ENCODE measurements at regions of chr14 and their contacts with region 1.

Region 1: DNA sequence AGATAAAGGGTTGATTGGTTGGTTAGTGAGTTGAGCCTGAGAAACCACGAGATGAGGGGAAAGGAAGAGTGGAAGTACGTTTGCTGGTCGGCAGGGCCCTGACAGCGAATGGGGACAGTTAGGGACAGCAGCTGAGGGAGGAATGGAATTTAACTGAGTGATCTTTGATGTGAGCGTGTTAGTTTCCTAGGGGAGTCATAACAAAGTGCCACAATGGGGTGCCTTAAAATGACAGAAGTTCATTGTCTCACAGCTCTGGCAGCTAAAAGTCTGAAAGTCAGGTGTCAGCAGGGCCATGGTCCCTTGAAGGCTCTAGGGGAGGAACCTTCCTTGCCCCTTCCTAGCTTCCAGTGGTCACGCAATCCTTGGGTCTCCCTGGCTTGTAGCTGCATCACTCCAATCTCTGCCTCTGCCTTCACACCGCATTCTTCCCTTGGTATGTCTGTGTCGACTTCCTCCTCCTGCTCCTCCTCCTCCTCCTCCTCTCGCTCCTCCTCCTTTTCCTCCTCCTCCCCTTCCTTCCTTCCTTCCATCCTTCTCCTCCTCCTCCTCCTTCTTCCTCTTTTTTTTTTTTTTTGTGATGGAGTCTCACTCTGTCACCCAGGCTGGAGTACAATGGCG is 26.0 kb upstream of the RIN3 start:
- DNase-seq: no peak
- ATAC-seq: peak in 1 of 2 donors; percentile 37
- H3K4me3 ChIP-seq: no peak overlapping the region
- H3K27ac ChIP-seq: no peak overlapping the region
- H3K4me1 ChIP-seq: peaks cover 8% of the 10 kb centered on the region
- H3K27me3 ChIP-seq: no peaks in the 10 kb centered on the region

Region 2: DNA sequence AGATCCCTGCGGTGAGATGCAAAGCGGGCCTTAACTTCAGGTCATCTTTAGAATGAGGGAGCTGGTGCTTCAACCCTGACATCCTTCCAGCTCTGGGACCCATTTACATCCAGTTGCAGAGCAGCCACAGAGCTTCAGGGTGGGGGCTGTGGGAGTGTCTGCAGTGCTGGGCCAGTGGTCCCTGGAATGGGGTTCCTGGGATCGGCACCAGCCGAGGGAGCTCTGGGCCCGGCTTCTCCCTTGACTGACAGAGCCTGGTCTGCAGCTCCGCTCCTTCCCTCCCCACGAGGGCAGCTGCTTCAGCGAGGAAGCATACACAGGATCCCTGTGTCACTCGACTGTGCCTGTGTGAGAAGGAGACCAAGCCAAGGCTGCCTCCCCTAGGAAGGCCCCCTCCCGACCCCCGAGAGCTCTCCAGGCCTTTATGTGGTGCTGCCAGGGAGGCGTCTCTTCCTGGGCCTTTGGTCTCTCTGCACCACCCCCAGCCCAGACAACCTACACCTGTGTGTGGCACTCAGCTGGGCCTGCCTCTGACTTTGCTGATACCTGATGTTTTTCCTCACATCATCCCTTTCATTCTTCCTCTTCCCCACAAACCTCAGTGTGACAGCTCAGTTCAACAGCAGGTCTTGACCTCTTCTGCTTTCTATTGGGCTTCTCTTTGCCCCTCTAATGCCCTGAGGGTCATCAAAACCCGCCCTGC is 22.1 kb before region 1 on chr14:
- intact Hi-C with region 1: loop called in 1 of 4 experiments (anchors 2 kb)
- DNase-seq: peak in 1 of 3 donors; percentile 30
- ATAC-seq: peak in 1 of 2 donors; percentile 30
- H3K4me3 ChIP-seq: no peak overlapping the region
- H3K27ac ChIP-seq: no peak overlapping the region
- H3K4me1 ChIP-seq: peaks cover 3% of the 10 kb centered on the region
- H3K27me3 ChIP-seq: no peaks in the 10 kb centered on the region